A673 (cell line): ENCODE measurements at regions of chr6 and their contacts with region 1.

Region 1: GRCh38 chr6:82687855-82688254 is 324.2 kb downstream of the TPBG start:
- DNase-seq: peak; percentile 98
- H3K4me3 ChIP-seq: peak overlapping the region; percentile 20
- H3K27ac ChIP-seq: peak overlapping the region; percentile 96
- H3K4me1 ChIP-seq: peaks cover 65% of the 10 kb centered on the region
- H3K27me3 ChIP-seq: no peaks in the 10 kb centered on the region
- CTCF ChIP-seq: no peak

Region 2: DNA sequence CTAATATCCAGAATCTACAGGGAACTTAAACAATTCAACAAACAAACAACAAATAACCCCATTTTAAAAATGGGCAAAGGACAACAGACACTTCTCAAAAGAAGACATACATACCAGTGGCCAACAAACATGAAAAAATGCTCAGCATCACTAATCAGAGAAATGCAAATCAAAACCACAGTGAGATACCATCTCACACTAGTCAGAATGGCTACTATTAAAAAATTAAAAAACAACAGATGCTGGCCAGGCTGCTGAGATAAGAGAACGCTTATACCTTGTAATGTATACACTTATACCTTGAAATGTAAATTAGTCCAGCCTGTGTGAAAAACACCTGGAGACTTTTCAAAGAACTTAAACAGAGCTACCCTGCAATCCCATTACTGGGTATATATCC is 607.1 kb before region 1 on chr6:
- CTCF ChIA-PET with region 1: no interaction called
- POLR2A ChIA-PET with region 1: no interaction called
- intact Hi-C with region 1: loop called (anchors 5 kb)
- DNase-seq: no peak
- H3K4me3 ChIP-seq: no peak overlapping the region
- H3K27ac ChIP-seq: no peak overlapping the region
- H3K4me1 ChIP-seq: peaks cover 46% of the 10 kb centered on the region
- H3K27me3 ChIP-seq: no peaks in the 10 kb centered on the region
- CTCF ChIP-seq: no peak

Region 3: DNA sequence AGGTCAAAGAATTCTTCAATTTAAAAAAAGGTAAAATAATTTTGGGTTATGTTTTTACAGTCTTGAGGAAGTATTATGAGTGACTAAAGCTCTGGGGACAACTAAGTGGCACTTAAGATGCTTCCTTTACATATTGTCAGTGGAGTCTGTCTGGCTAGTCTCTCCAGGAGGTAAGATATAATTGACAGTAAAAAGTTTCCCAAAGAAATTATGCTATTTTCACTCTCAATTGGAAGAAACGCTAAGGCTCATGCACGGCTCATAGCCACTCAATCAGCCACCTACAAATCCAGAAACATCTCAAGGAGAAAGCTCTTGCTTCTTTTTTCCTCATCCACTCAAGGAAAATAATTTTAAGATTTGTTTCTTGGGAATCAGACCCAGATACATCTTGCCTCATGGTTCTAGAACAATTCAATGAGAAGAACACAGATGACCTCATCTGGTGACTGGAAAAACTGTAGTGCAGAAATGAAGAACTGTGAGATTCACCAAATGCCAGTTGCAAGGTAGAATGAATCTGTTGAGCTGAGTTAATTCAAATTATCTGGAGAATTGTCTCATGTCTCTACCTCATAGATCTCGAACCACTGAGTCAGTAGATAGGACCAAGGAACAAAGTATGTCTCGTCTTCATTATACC is 71.3 kb before region 1 on chr6:
- CTCF ChIA-PET with region 1: no interaction called
- POLR2A ChIA-PET with region 1: no interaction called
- intact Hi-C with region 1: loop called (anchors 1 kb)
- DNase-seq: peak; percentile 93
- H3K4me3 ChIP-seq: peak overlapping the region; percentile 4
- H3K27ac ChIP-seq: peak overlapping the region; percentile 59
- H3K4me1 ChIP-seq: peaks cover 60% of the 10 kb centered on the region
- H3K27me3 ChIP-seq: no peaks in the 10 kb centered on the region
- CTCF ChIP-seq: peak; percentile 47; the same call in 1 of the 2 replicates

Region 4: DNA sequence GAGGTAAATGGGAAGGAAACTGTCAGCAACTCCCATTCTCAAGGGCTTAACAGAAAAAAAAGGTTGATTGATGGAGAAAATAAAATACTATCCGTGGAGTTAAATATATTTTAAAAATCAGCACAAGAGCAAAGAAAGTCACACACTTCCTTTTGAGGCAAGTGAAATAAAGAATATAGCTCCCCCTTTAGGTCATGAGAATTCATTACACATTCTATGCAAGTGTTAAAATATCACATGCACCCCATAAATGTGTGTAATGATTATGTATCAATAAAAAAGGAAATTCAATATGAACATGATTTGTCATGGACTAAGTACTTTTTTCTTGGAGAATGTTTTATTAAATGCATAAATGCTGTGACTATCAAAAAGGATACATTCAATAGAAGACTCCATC is 25.0 kb after region 1 on chr6:
- CTCF ChIA-PET with region 1: no interaction called
- POLR2A ChIA-PET with region 1: no interaction called
- intact Hi-C with region 1: no loop called
- DNase-seq: no peak
- H3K4me3 ChIP-seq: no peak overlapping the region
- H3K27ac ChIP-seq: no peak overlapping the region
- H3K4me1 ChIP-seq: peaks cover 23% of the 10 kb centered on the region
- H3K27me3 ChIP-seq: no peaks in the 10 kb centered on the region
- CTCF ChIP-seq: peak; percentile 60